Activated naive CD4-positive, alpha-beta T cell treated with anti-CD3 and anti-CD28 coated beads, Interleukin-2, amount 10 ng/mL, durations not matched to agents 7 days and 5 days (primary cell): ENCODE measurements at regions of chr1 and their contacts with region 1.

Region 1: DNA sequence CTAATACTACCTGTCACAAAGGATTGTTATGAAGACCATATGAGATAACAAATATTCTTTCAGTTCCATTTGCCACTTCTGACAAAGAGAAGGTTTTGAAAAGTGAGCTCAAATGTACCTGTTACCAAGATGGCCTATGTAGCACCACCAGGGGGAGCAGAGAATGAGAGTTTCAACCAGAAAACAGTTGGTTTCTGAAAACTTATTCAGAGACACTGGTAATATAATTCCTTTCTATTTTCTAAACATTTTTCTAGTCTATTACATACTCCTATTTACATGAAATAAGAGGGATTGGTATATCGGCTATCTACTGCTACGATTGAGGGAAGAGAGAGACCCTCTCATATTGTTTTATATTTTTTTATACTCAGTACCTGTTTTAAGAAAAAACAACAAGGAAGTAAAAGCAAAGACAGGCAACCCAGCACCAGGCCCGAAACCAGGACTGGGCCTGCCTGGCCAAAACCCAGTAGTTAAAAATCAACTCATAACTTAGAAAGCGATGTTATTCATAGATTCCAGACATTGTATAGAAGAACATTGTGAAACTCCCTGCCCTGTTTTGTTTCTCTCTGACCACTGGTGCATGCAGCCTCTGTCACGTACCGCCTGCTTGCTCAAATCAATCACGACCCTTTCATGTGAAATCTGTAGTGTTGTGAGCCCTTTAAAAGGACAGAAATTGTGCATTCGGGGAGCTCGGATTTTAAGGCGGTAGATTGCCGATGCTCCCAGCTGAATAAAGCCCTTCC is 48.3 kb downstream of the IL23R start:
- DNase-seq: peak; percentile 75
- H3K4me3 Mint-ChIP-seq: no peak overlapping the region
- H3K27ac Mint-ChIP-seq: no peak overlapping the region
- H3K4me1 Mint-ChIP-seq: peaks cover 44% of the 10 kb centered on the region
- H3K27me3 Mint-ChIP-seq: no peaks in the 10 kb centered on the region

Region 2: DNA sequence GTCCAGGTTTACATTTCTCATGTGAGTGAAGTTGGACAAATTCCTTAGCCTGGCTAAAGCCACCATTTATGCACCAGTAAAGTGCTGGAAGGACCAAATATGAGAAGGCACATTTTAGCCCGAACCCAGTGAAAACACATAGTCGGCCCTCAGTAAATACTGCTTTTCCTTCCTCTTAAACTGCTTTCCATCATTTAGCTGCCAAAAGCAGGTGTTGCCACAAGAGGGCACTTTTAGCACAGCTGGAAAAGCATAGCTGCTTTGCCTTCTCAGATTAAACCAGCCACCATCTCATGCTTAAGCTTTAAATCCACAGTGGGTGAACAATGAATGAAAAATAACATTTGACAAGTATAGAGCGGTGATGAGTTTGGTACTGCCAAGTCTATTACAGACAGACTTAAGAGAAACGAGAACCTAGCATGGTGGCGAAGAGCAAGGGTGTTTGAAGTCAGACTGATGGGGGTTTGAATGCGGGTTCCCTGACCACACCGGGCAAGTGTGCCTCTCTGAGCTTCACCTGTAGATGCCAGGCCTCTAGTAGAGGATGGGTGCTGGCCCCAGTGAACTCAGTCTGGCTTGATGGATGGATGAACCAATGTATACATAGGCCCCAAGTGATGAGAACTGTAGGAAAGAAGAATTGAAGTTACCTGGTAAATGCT is 218.4 kb before region 1 on chr1:
- CTCF ChIA-PET with region 1: interaction called, 58 read pairs
- DNase-seq: peak; percentile 79
- H3K4me3 Mint-ChIP-seq: no peak overlapping the region
- H3K27ac Mint-ChIP-seq: no peak overlapping the region
- H3K4me1 Mint-ChIP-seq: peaks cover 16% of the 10 kb centered on the region
- H3K27me3 Mint-ChIP-seq: no peaks in the 10 kb centered on the region

Region 3: DNA sequence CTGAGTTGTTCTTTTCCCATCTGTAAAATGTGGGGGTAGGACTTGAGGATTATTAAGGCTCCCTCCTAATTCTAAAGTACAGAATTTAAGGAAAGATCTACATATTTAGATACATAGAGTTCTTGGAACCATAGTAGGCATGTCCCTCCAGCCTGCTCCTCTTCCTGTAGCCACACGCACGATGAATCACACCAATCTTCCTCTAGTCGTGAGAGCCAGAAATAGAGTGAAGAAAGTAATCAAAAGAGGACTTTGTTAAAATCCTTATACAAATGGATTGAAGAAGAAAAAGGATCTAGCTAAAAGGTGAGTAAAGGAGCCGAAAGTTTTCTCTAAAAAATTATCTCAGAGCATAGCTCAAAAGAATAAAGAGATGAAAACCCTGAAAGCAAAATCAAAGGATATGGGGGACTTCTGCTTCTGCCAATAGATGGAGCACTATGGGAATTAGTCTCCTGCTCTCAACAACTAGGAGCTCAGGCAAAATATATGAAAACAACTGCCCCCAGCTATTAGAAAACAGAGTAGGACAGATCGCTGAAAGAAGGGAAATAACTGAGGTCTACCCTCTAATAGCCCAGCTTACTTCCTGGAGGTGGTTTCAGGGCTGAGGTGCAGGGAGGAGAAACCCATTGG is 88.4 kb before region 1 on chr1:
- CTCF ChIA-PET with region 1: no interaction called
- DNase-seq: no peak
- H3K4me3 Mint-ChIP-seq: no peak overlapping the region
- H3K27ac Mint-ChIP-seq: no peak overlapping the region
- H3K4me1 Mint-ChIP-seq: no peaks in the 10 kb centered on the region
- H3K27me3 Mint-ChIP-seq: no peaks in the 10 kb centered on the region

Region 4: DNA sequence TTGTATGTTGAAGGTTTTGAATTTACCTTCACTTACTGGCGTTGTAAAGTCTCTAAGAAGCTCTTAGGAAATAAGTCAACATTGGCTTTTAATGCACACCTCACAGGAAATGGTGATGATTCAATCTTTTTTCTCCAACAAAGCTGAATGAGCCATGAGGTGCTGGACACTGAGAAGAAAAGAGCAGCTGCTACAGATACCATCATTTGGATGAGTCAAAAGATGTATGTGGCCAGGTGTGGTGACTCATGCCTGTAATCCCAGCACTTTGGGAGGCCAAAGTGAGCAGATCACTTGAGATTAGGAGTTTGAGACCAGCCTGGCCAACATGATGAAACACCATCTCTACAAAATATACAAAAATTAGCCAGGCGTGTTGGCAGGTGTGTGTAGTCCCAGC is 51.6 kb before region 1 on chr1:
- CTCF ChIA-PET with region 1: interaction called, 175 read pairs
- DNase-seq: peak; percentile 35
- H3K4me3 Mint-ChIP-seq: no peak overlapping the region
- H3K27ac Mint-ChIP-seq: peak overlapping the region; percentile 35
- H3K4me1 Mint-ChIP-seq: peaks cover 28% of the 10 kb centered on the region
- H3K27me3 Mint-ChIP-seq: no peaks in the 10 kb centered on the region

Region 5: GRCh38 chr1:67227196-67227595 is 12.6 kb after region 1 on chr1:
- CTCF ChIA-PET with region 1: interaction called, 56 read pairs
- DNase-seq: no peak
- H3K4me3 Mint-ChIP-seq: no peak overlapping the region
- H3K27ac Mint-ChIP-seq: no peak overlapping the region
- H3K4me1 Mint-ChIP-seq: peaks cover 9% of the 10 kb centered on the region
- H3K27me3 Mint-ChIP-seq: no peaks in the 10 kb centered on the region

Region 6: GRCh38 chr1:67347688-67348472 is 133.3 kb after region 1 on chr1:
- CTCF ChIA-PET with region 1: interaction called, 15 read pairs
- DNase-seq: peak; percentile 44
- H3K4me3 Mint-ChIP-seq: no peak overlapping the region
- H3K27ac Mint-ChIP-seq: no peak overlapping the region
- H3K4me1 Mint-ChIP-seq: peaks cover 18% of the 10 kb centered on the region
- H3K27me3 Mint-ChIP-seq: no peaks in the 10 kb centered on the region

Region 7: GRCh38 chr1:67489643-67490042 is 275.0 kb after region 1 on chr1:
- CTCF ChIA-PET with region 1: interaction called, 18 read pairs
- DNase-seq: no peak
- H3K4me3 Mint-ChIP-seq: no peak overlapping the region
- H3K27ac Mint-ChIP-seq: no peak overlapping the region
- H3K4me1 Mint-ChIP-seq: no peaks in the 10 kb centered on the region
- H3K27me3 Mint-ChIP-seq: peaks cover 4% of the 10 kb centered on the region